WTC11 (cell line): ENCODE measurements at regions of chrX and their contacts with region 1.

Region 1: GRCh38 chrX:110847334-110847733 is 51.7 kb upstream of the CHRDL1 start:
- DNase-seq: no peak
- ATAC-seq: peak; percentile 77
- H3K4me3 Mint-ChIP-seq: no peak overlapping the region
- H3K27ac Mint-ChIP-seq: no peak overlapping the region
- H3K4me1 Mint-ChIP-seq: no peaks in the 10 kb centered on the region
- H3K27me3 Mint-ChIP-seq: no peaks in the 10 kb centered on the region
- CTCF ChIP-seq: 0 out of 2 replicates have a peak, but pooled peaks have one; percentile 28

Region 2: DNA sequence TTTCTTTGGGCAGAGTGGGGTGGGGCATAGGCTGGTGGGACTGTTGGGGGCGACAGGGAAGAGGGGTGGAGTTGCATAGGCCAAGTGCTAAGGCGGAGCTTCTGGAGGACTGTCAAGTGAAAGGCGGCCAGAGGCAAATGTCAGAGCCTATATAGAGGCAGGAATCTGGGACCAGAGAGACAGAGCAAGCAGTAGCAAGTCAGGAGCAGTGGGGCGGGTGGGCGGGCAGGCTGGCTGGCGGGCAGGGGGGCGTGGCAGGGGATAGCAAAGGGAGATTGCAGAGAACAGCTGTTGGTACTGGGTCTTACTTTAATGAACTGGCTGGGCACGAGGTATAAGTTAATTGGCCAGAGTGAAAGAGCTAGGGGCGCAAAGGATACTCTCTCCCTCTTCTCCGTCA is 398.9 kb before region 1 on chrX:
- CTCF ChIA-PET with region 1: interaction called, 13 read pairs
- POLR2A ChIA-PET with region 1: no interaction called
- DNase-seq: no peak
- ATAC-seq: peak; percentile 57
- H3K4me3 Mint-ChIP-seq: no peak overlapping the region
- H3K27ac Mint-ChIP-seq: no peak overlapping the region
- H3K4me1 Mint-ChIP-seq: peaks cover 24% of the 10 kb centered on the region
- H3K27me3 Mint-ChIP-seq: no peaks in the 10 kb centered on the region; the same call in 1 of the 2 replicates
- CTCF ChIP-seq: no peak

Region 3: GRCh38 chrX:110600745-110601310 is 246.5 kb before region 1 on chrX:
- CTCF ChIA-PET with region 1: no interaction called
- POLR2A ChIA-PET with region 1: no interaction called
- DNase-seq: no peak
- ATAC-seq: no peak
- H3K4me3 Mint-ChIP-seq: no peak overlapping the region
- H3K27ac Mint-ChIP-seq: no peak overlapping the region
- H3K4me1 Mint-ChIP-seq: no peaks in the 10 kb centered on the region
- H3K27me3 Mint-ChIP-seq: peaks cover 9% of the 10 kb centered on the region
- CTCF ChIP-seq: no peak